Activated naive CD4-positive, alpha-beta T cell treated with anti-CD3 and anti-CD28 coated beads for 36 hours (primary cell): ENCODE measurements at regions of chr5 and their contacts with region 1.

Region 1: DNA sequence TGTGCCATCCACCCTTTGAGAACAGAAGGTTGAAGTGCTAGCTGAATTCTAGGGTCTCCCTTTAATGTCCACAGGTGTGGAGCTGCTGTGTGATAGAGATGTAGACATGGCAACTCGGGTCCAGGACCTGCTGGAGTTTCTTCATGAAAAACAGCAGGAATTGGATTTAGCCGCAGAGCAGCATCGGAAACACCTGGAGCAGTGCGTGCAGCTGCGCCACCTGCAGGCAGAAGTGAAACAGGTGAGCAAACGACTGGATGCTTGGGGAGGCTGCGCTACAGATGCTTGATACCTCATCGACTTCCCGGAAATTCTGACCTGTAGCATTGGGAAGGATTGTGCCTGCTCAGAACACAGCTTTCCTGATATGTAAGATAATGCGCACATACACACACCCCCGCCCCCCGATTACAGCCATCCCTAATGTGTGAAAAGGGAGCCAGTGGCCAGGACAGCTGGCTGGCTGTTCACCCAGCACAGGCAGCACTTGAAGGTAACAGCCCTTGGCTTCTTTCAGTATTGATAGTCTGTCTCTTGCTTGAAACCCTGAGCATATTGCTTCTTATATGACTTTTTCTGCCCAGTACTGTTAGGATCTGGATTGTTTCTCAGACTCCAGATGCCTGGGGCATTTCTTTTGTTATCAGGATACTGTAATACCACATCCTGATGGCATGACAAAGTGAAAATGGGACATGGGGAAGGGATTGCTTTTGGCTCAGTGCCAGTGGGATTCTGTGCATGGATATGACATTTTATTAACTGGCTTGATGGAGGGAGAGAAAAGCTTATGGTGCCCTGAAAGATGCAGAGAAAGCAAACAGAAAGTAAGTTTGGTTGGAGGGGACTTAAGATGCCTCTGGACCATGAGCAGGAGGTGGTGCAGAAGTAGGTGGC is 216.8 kb upstream of the OTULINL start:
- DNase-seq: peak; percentile 34
- H3K4me3 Mint-ChIP-seq: no peak overlapping the region
- H3K27ac Mint-ChIP-seq: no peak overlapping the region
- H3K4me1 Mint-ChIP-seq: peaks cover 24% of the 10 kb centered on the region
- H3K27me3 Mint-ChIP-seq: no peaks in the 10 kb centered on the region

Region 2: DNA sequence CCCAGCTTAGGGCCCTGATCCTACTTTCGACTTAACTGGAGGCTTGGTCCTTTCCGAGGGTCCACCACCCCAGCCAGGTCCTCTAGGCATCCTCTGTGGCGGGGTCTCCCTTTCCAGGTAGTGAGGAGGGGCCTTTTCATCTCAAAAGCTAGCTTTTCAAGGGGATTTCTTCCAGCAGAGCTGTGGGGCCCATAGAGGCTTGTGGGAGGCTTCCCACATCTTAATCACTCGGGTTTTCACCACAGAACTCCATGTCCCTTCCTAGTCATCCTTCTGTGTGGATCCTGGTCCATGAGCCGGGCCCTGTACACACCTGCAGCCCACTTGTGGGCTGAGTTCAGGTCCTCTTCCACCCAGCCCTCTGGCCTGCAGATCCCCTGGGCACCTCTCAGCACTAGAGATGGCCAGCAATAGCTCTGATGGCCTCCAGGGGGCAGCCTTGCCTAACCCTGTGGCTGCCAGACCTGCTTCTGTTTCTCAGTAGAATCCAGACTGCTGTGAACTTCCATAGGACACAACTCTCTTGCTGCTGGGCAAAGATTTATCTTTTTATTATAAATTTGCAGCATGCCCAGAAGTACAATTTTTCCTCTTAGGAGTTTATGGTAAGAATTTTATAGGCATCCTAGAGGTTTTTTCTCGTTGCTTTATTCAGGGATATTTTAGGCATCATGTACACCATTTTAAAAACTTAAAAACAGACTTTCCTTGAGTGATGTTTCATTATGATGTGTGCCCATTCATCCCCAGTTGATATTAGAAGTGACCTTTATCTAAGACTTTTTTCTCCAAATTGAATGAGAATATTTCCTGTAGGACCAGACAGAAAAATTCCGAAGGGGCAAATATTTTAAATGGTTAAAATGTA is 12.7 kb before region 1 on chr5:
- CTCF ChIA-PET with region 1: interaction called, 11 read pairs
- intact Hi-C with region 1: loop called (anchors 1 kb)
- DNase-seq: peak; percentile 68
- H3K4me3 Mint-ChIP-seq: no peak overlapping the region
- H3K27ac Mint-ChIP-seq: no peak overlapping the region
- H3K4me1 Mint-ChIP-seq: no peaks in the 10 kb centered on the region
- H3K27me3 Mint-ChIP-seq: no peaks in the 10 kb centered on the region

Region 3: GRCh38 chr5:14399054-14399692 is 34.3 kb after region 1 on chr5:
- CTCF ChIA-PET with region 1: interaction called, 5 read pairs
- intact Hi-C with region 1: loop called (anchors 5 kb)
- DNase-seq: no peak
- H3K4me3 Mint-ChIP-seq: no peak overlapping the region
- H3K27ac Mint-ChIP-seq: no peak overlapping the region
- H3K4me1 Mint-ChIP-seq: peaks cover 12% of the 10 kb centered on the region
- H3K27me3 Mint-ChIP-seq: no peaks in the 10 kb centered on the region

Region 4: DNA sequence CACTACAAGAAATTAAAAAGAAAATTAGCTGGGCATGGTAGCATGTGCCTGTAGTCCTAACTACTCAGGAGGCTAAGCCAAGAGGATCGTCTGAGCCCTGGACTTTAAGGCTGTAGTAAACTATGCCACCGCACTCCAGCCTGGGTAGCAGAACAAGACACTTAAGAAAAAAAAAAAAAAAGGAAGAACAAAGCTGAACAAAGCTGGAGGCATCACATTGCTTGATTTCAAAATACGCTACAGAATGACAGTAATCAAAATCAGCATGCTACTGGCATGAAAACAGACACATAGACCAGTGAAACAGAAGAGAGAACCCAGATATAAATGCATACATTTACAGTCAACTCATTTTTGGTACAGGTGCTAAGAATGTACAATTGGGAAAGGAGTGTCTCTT is 285.2 kb after region 1 on chr5:
- CTCF ChIA-PET with region 1: interaction called, 73 read pairs
- intact Hi-C with region 1: loop called (anchors 1 kb)
- DNase-seq: no peak
- H3K4me3 Mint-ChIP-seq: no peak overlapping the region
- H3K27ac Mint-ChIP-seq: no peak overlapping the region
- H3K4me1 Mint-ChIP-seq: peaks cover 2% of the 10 kb centered on the region
- H3K27me3 Mint-ChIP-seq: peaks cover 15% of the 10 kb centered on the region

Region 5: GRCh38 chr5:14655146-14655741 is 290.4 kb after region 1 on chr5:
- CTCF ChIA-PET with region 1: interaction called, 73 read pairs
- intact Hi-C with region 1: no loop called
- DNase-seq: no peak
- H3K4me3 Mint-ChIP-seq: no peak overlapping the region
- H3K27ac Mint-ChIP-seq: no peak overlapping the region
- H3K4me1 Mint-ChIP-seq: peaks cover 39% of the 10 kb centered on the region
- H3K27me3 Mint-ChIP-seq: peaks cover 6% of the 10 kb centered on the region

Region 6: DNA sequence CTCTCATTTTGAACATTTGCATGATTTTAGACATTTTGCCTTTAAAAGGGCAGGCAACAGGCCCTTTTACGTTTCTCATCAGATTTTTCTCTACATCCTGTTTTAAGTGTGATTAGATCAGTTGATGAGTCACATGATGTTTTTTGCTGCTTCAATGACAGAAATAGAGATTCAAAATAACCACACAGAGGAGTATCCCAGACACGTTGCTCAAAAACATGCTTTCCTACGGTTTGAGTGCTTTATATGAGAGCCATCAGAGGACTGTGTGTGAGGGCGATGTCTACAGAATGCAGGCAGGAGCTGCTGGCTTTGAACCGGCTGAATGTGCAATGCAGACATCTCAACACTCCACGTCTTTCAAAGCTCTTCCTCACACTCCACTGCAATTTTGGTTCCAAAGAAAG is 341.8 kb after region 1 on chr5:
- CTCF ChIA-PET with region 1: no interaction called
- intact Hi-C with region 1: loop called (anchors 1 kb)
- DNase-seq: peak; percentile 46
- H3K4me3 Mint-ChIP-seq: peak overlapping the region; percentile 18
- H3K27ac Mint-ChIP-seq: peak overlapping the region; percentile 94
- H3K4me1 Mint-ChIP-seq: peaks cover 75% of the 10 kb centered on the region
- H3K27me3 Mint-ChIP-seq: no peaks in the 10 kb centered on the region

Region 7: GRCh38 chr5:15013654-15014463 is 649.0 kb after region 1 on chr5:
- CTCF ChIA-PET with region 1: no interaction called
- intact Hi-C with region 1: loop called (anchors 1 kb)
- DNase-seq: no peak
- H3K4me3 Mint-ChIP-seq: no peak overlapping the region
- H3K27ac Mint-ChIP-seq: no peak overlapping the region
- H3K4me1 Mint-ChIP-seq: no peaks in the 10 kb centered on the region
- H3K27me3 Mint-ChIP-seq: no peaks in the 10 kb centered on the region